Testis (tissue), 5 donors: ENCODE measurements at regions of chr22 and their contacts with region 1.

Region 1: DNA sequence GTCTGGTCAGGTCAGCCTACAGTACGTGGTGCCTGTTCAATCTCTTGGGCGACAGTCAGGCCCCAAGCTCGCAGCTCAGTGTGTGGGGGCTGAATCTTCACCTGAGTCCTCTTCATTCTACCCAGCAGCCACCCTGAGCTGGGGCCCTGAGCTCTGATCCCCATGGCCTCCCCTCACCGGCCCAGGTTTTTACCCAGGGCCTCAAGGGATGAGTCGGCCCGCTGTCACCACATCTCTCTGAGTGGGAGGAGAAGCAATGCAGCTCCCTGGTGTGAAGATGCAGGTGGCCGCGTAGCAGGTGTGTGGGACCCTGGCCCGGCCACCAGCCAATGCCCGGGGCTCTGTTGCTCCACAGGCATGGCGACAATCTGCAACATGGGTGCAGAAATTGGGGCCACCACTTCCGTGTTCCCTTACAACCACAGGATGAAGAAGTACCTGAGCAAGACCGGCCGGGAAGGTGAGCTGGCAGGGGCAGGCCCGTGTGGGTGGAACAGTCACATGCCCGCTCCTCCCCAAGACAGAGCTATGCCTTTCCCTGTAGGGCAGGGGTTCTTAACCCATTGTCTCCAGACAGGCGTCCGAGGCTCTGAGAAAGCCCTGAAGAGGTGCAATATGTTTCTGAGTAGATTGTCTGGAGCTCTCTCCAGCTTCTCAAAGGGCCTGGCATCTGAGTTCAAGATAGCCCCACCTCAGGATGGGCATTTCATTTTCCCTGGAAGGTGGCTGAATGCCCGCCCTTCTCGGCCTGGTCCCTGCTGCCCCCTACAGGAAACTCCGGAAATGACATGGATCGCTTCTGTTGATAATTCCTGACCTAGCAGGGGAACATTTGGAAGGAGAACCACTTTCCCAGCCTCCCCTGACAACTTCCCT is 26.9 kb downstream of the POLR3H start:
- DNase-seq: peak; percentile 85
- H3K4me3 ChIP-seq: no peak overlapping the region
- H3K27ac ChIP-seq: no peak overlapping the region
- H3K4me1 ChIP-seq: peaks cover 13% of the 10 kb centered on the region
- H3K27me3 ChIP-seq: no peaks in the 10 kb centered on the region
- CTCF ChIP-seq: peak; percentile 85 to 90 (median 88)
- POLR2A ChIP-seq: no peak

Region 2: DNA sequence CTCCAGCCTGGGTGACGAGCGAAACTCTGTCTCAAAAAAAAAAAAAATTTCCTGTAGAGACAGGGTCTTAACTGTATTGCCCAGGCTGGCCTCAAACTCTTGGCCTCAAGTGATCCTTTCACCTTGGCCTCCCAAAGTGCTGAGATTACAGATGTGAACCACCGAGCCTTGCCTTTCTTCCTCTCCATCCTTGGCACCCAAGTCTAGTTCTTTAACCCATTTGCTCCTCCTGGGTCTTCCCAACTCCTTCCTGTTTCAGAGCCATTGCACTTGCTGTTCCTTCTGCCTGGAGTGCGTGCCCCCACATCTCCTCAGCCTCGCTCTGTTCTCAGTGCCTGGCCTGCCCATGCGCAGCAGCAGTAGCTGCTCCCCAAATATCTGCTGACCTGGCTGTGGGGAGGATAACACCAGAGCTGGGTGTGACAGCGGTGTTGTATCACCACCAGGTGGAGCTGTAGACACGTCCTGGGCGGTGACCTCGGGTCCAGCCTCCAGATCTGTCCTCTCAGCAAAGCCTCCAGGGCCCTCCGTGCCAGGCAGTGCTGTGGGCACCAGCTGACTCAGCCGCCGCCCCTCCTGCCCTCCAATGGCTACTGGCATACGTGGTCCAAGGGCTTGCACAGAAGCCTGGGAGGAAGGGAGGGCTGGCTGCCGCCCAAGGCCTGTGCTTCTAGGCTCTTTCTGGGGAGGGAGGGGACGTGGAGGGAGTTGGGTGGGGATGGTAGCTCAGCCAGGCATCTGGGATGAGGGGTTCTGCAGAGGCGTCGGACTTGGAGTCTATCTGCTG is 113.7 kb before region 1 on chr22:
- intact Hi-C with region 1: loop called (anchors 5 kb)
- DNase-seq: peak; percentile 94
- H3K4me3 ChIP-seq: no peak overlapping the region
- H3K27ac ChIP-seq: no peak overlapping the region
- H3K4me1 ChIP-seq: peaks cover 19% of the 10 kb centered on the region
- H3K27me3 ChIP-seq: no peaks in the 10 kb centered on the region
- CTCF ChIP-seq: peak; percentile 93 to 98 (median 98)
- POLR2A ChIP-seq: no peak

Region 3: GRCh38 chr22:41478891-41479521 is 38.4 kb before region 1 on chr22:
- intact Hi-C with region 1: no loop called
- DNase-seq: no peak
- H3K4me3 ChIP-seq: no peak overlapping the region
- H3K27ac ChIP-seq: no peak overlapping the region
- H3K4me1 ChIP-seq: peaks cover 28% of the 10 kb centered on the region
- H3K27me3 ChIP-seq: no peaks in the 10 kb centered on the region
- CTCF ChIP-seq: no peak
- POLR2A ChIP-seq: no peak

Region 4: GRCh38 chr22:41621099-41621910 is 103.9 kb after region 1 on chr22 and contains the start of gene XRCC6:
- intact Hi-C with region 1: no loop called
- DNase-seq: peak; percentile 100
- H3K4me3 ChIP-seq: peak within 1 kb of the TSS; percentile 87 to 93
- H3K27ac ChIP-seq: peak within 1 kb of the TSS; percentile 97 to 98
- H3K4me1 ChIP-seq: peaks cover 19% of the 10 kb centered on the region
- H3K27me3 ChIP-seq: no peaks in the 10 kb centered on the region
- CTCF ChIP-seq: no peak
- POLR2A ChIP-seq: peak; percentile 81
- total RNA-seq, gene XRCC6: 290 to 317 TPM